Dorsolateral prefrontal cortex (tissue), 120 donors: ENCODE measurements at regions of chr3 and their contacts with region 1.

Region 1: DNA sequence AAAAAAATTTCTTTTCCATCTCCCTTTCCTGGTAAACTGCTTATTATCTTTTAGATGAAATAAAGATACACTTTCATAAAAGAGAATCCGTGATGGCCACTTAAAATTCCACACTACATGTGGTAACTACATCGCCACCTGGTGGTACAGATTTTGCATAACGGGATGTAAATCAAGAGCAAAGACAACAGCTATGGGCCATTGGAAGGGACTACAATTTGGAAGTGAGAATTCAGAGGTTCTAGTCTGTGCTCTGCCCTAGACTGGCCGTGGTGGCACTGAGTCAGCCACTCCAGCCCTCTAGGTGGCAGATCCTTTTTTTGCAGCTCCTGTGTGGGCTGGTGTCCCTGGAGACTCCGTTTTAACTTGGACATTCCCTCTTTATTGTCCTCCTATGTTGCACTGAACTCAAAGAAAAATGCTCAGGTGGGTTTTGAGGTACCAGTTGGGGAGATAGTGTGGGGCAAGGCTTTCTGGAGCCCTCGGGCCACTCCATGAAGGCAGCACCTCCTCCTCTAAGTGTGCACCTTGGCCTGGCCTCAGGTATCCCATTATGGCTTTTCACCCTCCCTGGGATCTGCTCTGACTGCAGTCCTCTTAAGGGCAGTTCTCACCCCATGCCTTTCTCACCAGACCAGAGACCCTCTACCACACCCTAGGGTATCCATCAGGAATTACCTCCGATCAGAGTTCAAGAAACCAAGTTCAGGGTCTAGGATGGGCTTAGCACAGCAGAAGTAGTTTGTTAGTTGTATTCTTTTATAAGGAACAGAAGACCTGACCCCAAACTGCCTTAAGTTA is 54.9 kb downstream of the SPSB4 start:
- DNase-seq: peak in 6 of 10 donors; percentile 46 to 92 (median 69)
- H3K4me3 ChIP-seq: no peak overlapping the region
- H3K27ac ChIP-seq: no peak overlapping the region
- H3K27me3 ChIP-seq: peaks cover 0 to 5% (median 0%) of the 10 kb centered on the region in 45 donors
- CTCF ChIP-seq: peak; percentile 70 to 93 (median 85)

Region 2: GRCh38 chr3:140898340-140899180 is 207.5 kb before region 1 on chr3:
- intact Hi-C with region 1: loop called in 1 of 2 experiments (anchors 10 kb)
- DNase-seq: no peak
- H3K4me3 ChIP-seq: no peak overlapping the region
- H3K27ac ChIP-seq: no peak overlapping the region
- H3K27me3 ChIP-seq: no peaks in the 10 kb centered on the region
- CTCF ChIP-seq: peak; percentile 35 to 83 (median 66)

Region 3: GRCh38 chr3:141000027-141000663 is 105.9 kb before region 1 on chr3:
- intact Hi-C with region 1: loop called in 1 of 2 experiments (anchors 5 kb)
- DNase-seq: peak; percentile 30 to 80 (median 68)
- H3K4me3 ChIP-seq: no peak overlapping the region
- H3K27ac ChIP-seq: no peak overlapping the region
- H3K27me3 ChIP-seq: no peaks in the 10 kb centered on the region
- CTCF ChIP-seq: peak in 55 of 56 donors; percentile 35 to 87 (median 72)

Region 4: GRCh38 chr3:141011232-141011996 is 94.6 kb before region 1 on chr3:
- intact Hi-C with region 1: loop called (anchors 5 kb)
- DNase-seq: peak; percentile 58 to 88 (median 84)
- H3K4me3 ChIP-seq: no peak overlapping the region
- H3K27ac ChIP-seq: no peak overlapping the region
- H3K27me3 ChIP-seq: peaks cover 0 to 19% (median 0%) of the 10 kb centered on the region in 45 donors
- CTCF ChIP-seq: peak; percentile 45 to 88 (median 79)

Region 5: GRCh38 chr3:141076797-141077571 is 29.0 kb before region 1 on chr3:
- intact Hi-C with region 1: no loop called
- DNase-seq: peak in 6 of 10 donors; percentile 44 to 86 (median 56)
- H3K4me3 ChIP-seq: peak overlapping the region; percentile 0 to 65 (median 46)
- H3K27ac ChIP-seq: peak overlapping the region in 37 of 59 donors; percentile 1 to 88 (median 48)
- H3K27me3 ChIP-seq: no peaks in the 10 kb centered on the region
- CTCF ChIP-seq: peak in 1 of 56 donors; percentile 2

Region 6: DNA sequence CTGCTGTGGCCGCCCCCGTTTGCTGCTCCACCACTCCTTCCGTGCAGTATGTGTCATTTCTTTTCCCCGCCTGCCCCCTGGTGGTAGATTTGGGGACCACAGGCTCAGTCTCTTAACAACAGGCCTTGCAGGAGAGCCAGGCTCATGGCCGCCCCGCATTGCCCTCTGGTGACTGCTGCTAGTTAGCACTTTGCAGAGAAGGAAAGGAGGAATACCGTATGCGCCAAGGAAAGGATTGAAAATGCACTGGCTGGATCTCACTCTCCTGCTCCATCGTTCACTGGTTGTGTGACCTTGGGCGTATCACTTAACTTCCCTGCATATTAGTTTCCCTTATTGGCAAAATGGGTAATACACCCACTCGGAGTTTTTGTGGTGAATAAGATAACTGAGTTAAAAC is 86.3 kb after region 1 on chr3:
- intact Hi-C with region 1: loop called in 1 of 2 experiments (anchors 5 kb)
- DNase-seq: peak; percentile 94 to 100 (median 98)
- H3K4me3 ChIP-seq: no peak overlapping the region
- H3K27ac ChIP-seq: no peak overlapping the region
- H3K27me3 ChIP-seq: peaks cover 0 to 8% (median 0%) of the 10 kb centered on the region in 45 donors
- CTCF ChIP-seq: peak; percentile 82 to 100 (median 99)

Region 7: GRCh38 chr3:142356818-142357217 is 1250.8 kb after region 1 on chr3:
- intact Hi-C with region 1: no loop called
- DNase-seq: no peak
- H3K4me3 ChIP-seq: no peak overlapping the region
- H3K27ac ChIP-seq: no peak overlapping the region
- H3K27me3 ChIP-seq: no peaks in the 10 kb centered on the region
- CTCF ChIP-seq: no peak